Heart right ventricle (tissue), 16 donors: ENCODE measurements at regions of chr10 and their contacts with region 1.

Region 1: GRCh38 chr10:94027196-94027595 is 33.5 kb downstream of the PLCE1 start:
- DNase-seq: no peak
- ATAC-seq: no peak
- H3K4me3 ChIP-seq: no peak overlapping the region
- H3K27ac ChIP-seq: no peak overlapping the region
- H3K4me1 ChIP-seq: peaks cover 0 to 5% (median 0%) of the 10 kb centered on the region in 9 donors
- H3K27me3 ChIP-seq: no peaks in the 10 kb centered on the region
- CTCF ChIP-seq: no peak

Region 2: DNA sequence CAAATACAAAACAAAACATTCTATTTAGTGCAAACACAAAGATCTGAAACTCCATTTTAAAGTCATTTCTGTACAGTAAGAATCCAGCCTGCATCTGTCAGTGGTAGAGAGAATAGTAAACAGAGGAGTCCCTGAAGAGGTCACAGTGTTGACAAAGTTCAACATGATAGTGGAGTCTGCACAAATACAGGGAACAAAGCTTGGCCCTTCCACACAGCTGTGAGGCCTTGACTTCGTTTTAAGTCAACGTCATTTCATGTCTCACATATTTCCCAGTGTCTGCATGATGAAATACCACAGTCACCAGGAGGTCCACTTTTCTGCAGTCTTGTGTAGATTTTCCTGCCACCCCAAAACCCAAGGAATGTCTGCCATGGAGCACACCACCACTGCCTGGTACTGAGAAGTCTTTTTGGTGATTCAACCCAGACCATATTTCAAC is 920.5 kb before region 1 on chr10:
- intact Hi-C with region 1: no loop called
- DNase-seq: no peak
- ATAC-seq: no peak
- H3K4me3 ChIP-seq: no peak overlapping the region
- H3K27ac ChIP-seq: no peak overlapping the region
- H3K4me1 ChIP-seq: no peaks in the 10 kb centered on the region
- H3K27me3 ChIP-seq: peaks cover 0 to under 1% (median 0%) of the 10 kb centered on the region in 7 donors
- CTCF ChIP-seq: no peak

Region 3: DNA sequence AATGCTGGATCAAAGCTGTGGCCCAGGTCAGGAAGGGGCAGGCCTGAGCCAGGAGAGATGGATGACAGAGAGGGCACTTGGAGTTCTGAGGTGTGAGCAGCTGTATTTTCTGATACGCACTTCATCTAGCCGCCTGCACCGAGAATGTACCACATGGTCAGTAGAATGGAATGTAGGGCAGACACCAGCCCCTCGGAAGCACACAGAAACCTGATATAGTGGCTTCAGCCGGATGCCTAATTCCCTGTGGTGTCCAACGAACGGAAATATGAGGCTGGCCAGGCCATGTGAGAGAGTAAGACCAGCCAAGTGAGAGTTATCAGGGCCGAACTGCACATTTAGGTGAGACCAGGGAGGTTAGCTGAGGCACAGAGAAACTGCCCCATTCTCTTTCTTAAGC is 80.1 kb before region 1 on chr10:
- intact Hi-C with region 1: no loop called
- DNase-seq: peak in 1 of 2 donors; percentile 70
- ATAC-seq: peak; percentile 79 to 95 (median 92)
- H3K4me3 ChIP-seq: no peak overlapping the region
- H3K27ac ChIP-seq: peak overlapping the region in 8 of 10 donors; percentile 40 to 88 (median 77)
- H3K4me1 ChIP-seq: peaks cover 0 to 47% (median 27%) of the 10 kb centered on the region in 9 donors
- H3K27me3 ChIP-seq: no peaks in the 10 kb centered on the region
- CTCF ChIP-seq: no peak

Region 4: GRCh38 chr10:93963434-93963833 is 63.8 kb before region 1 on chr10:
- intact Hi-C with region 1: loop called in 1 of 10 experiments (anchors 2 kb)
- DNase-seq: no peak
- ATAC-seq: peak in 1 of 8 donors; percentile 32
- H3K4me3 ChIP-seq: no peak overlapping the region
- H3K27ac ChIP-seq: no peak overlapping the region
- H3K4me1 ChIP-seq: peaks cover 0 to 9% (median under 1%) of the 10 kb centered on the region in 9 donors
- H3K27me3 ChIP-seq: no peaks in the 10 kb centered on the region
- CTCF ChIP-seq: no peak